AG04449 (cell line): ENCODE measurements at regions of chr22 and their contacts with region 1.

Region 1: DNA sequence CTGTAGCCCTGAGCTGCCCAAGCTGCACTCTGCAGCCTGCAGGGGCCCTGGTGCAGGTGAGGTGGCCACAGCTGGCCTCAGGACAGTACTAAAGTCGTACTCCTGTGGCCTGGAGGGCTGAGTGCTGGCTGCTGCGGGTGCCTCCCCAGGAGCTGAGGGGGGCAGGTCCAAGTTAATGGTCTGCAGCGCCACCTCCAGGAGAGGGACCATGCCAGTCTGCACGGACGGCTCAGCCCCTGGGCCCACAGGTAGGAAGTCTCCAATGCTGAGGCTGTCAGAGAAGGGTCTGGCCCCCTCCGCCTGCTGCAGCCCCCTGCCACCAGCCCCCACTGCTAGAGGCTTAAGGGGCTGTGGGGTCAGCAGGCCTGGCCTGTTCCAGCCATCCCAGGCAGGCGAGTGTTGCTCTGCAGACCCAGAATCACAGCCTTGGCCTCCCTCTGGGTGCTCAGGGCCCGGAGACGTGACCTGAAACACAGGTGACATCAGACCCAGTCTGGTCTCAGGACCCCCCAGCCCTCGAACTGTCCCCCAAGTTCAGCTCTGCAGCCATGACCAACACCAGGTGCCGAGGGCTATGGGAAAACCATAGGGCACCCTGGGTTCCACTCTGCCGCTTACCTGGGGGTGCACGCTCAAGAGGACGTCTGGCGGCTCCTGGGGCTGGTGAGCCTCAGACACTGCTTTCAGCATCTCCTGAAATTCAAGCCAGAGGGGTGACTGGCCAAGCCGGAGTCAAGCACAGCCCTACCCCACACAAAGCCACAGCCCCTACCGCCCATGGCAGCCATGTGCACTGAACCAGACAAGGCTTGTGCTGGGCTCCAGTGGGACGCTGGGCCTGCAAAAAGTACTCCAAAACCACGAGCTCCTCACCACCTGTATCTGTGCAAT is 20.8 kb downstream of the SELENOO start:
- DNase-seq: no peak
- H3K4me3 ChIP-seq: no peak overlapping the region
- CTCF ChIP-seq: no peak

Region 2: DNA sequence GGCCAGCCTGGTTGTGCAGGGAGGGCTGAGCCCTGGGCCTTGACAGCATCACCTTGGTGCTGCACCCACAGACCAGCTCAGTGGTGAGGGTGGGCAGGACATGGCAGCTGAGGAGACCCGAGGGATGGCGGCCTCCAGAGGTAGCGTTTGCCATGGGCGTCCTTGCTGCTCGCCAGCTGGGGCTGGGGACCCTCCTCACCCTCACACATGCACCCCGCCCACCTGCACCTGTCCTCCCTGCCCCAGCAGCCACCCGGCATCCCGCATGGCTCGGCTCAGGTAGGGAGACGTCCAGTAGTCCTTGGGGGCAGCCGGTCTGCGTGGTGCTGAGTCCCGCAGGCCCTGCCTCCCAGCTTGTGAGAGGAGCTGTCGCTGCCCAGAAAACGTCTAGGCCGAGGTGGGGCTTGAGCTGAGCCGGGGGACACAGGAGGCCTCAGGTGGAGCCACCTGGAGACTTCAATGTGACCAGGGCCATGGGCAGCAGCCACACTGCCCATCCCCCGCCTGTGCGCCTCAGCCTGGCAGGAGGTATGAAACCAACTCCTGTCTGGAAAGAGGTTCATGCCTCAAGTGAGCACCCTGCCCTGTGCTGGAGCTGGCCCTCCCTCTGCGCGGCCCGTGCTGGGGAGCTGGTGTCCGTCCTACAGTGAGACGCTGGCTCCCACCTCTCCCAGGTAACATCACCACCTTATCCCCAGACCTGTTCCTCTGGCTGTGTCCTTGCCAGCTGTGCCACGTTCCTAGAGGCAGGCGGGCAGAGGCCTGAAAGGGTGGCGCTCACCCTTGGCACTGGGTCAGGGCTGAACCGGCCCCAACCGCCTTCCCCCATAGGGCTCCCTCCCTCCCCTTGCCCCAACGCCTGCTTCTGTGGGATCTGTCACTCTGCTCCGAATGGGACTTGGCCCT is 39.2 kb before region 1 on chr22:
- CTCF ChIA-PET with region 1: no interaction called
- POLR2A ChIA-PET with region 1: no interaction called
- DNase-seq: no peak
- H3K4me3 ChIP-seq: no peak overlapping the region
- CTCF ChIP-seq: no peak

Region 3: GRCh38 chr22:50236731-50237409 is 15.2 kb after region 1 on chr22:
- CTCF ChIA-PET with region 1: interaction called, 14 read pairs
- POLR2A ChIA-PET with region 1: no interaction called
- DNase-seq: no peak
- H3K4me3 ChIP-seq: no peak overlapping the region
- CTCF ChIP-seq: peak; percentile 59